WTC11 (cell line): ENCODE measurements at regions of chr10 and their contacts with region 1.

Region 1: GRCh38 chr10:103854686-103855423 is 521 bp downstream of the SH3PXD2A start:
- DNase-seq: peak; percentile 53
- ATAC-seq: peak; percentile 11
- H3K4me3 Mint-ChIP-seq: peak overlapping the region; percentile 84
- H3K27ac Mint-ChIP-seq: no peak overlapping the region
- H3K4me1 Mint-ChIP-seq: peaks cover 26% of the 10 kb centered on the region
- H3K27me3 Mint-ChIP-seq: peaks cover 43% of the 10 kb centered on the region
- CTCF ChIP-seq: no peak

Region 2: GRCh38 chr10:103731609-103732270 is 123.1 kb before region 1 on chr10:
- CTCF ChIA-PET with region 1: interaction called, 11 read pairs
- POLR2A ChIA-PET with region 1: no interaction called
- DNase-seq: no peak
- ATAC-seq: no peak
- H3K4me3 Mint-ChIP-seq: no peak overlapping the region
- H3K27ac Mint-ChIP-seq: peak overlapping the region; percentile 29; the same call in 1 of the 2 replicates
- H3K4me1 Mint-ChIP-seq: peaks cover 42% of the 10 kb centered on the region
- H3K27me3 Mint-ChIP-seq: no peaks in the 10 kb centered on the region
- CTCF ChIP-seq: no peak

Region 3: GRCh38 chr10:103772096-103772845 is 82.6 kb before region 1 on chr10:
- CTCF ChIA-PET with region 1: interaction called, 16 read pairs
- POLR2A ChIA-PET with region 1: interaction called, 5 read pairs
- DNase-seq: peak; percentile 87
- ATAC-seq: peak; percentile 92
- H3K4me3 Mint-ChIP-seq: peak overlapping the region; percentile 85
- H3K27ac Mint-ChIP-seq: peak overlapping the region; percentile 99
- H3K4me1 Mint-ChIP-seq: peaks cover 34% of the 10 kb centered on the region
- H3K27me3 Mint-ChIP-seq: no peaks in the 10 kb centered on the region
- CTCF ChIP-seq: no peak

Region 4: GRCh38 chr10:103781329-103782061 is 73.4 kb before region 1 on chr10:
- CTCF ChIA-PET with region 1: interaction called, 14 read pairs
- POLR2A ChIA-PET with region 1: interaction called, 3 read pairs
- DNase-seq: no peak
- ATAC-seq: peak; percentile 75
- H3K4me3 Mint-ChIP-seq: no peak overlapping the region
- H3K27ac Mint-ChIP-seq: no peak overlapping the region
- H3K4me1 Mint-ChIP-seq: peaks cover 19% of the 10 kb centered on the region; the same call in 1 of the 2 replicates
- H3K27me3 Mint-ChIP-seq: no peaks in the 10 kb centered on the region
- CTCF ChIP-seq: no peak

Region 5: DNA sequence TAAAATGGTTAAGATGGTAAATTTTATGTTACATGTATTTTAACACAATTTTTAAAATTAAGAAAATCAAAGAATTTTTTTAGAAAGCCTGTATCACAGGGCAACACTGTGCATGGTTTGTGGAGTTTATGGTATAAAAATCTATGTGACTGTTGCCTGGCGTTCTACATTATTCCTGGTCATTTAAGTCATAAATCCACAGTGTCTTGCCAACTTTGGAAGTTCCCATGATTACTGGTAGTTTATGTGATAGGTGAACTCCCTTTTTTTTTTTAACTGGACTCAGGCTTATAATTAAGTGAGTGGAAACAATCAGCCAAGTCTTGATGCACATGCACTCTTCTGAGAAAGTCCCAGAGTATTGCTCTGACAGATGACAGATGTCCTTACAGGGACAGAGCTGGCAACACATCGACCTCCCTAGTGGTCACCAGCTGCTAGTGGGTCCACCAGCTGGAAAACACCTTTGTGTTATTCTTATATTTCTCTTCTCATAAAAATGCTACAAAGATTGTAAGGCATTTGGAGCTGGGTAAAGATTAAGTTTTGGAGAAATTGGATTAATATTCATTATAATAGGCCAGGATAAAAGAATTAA is 72.0 kb after region 1 on chr10:
- CTCF ChIA-PET with region 1: no interaction called
- POLR2A ChIA-PET with region 1: no interaction called
- DNase-seq: no peak
- ATAC-seq: no peak
- H3K4me3 Mint-ChIP-seq: no peak overlapping the region
- H3K27ac Mint-ChIP-seq: no peak overlapping the region
- H3K4me1 Mint-ChIP-seq: peaks cover 18% of the 10 kb centered on the region
- H3K27me3 Mint-ChIP-seq: no peaks in the 10 kb centered on the region
- CTCF ChIP-seq: no peak